ENCODE measurements at regions of chr12 and their contacts with region 1.

Region 1: DNA sequence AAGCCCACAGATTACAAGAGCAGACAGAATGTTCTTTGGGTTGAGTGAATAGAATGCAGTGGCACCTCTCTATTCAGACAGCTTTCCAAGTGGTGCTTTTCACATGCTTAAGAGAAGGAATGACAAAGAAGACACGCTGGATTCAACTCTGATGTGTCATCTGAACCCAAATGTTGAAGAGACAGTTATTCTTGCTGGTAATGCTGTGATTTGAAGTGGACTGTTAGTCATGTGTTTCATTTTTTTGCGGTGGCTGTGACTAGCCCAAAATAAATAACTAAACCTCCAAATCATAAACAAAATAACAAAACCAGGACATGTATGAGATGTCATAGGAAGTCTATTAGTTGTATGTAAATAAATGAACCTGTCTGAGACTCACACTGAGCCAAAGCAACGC is 391.8 kb upstream of the PRICKLE1 start:
- DNase-seq: no peak
- H3K4me3 ChIP-seq: no peak overlapping the region
- H3K27ac ChIP-seq: no peak overlapping the region
- H3K4me1 ChIP-seq: no peaks in the 10 kb centered on the region
- H3K27me3 ChIP-seq: no peaks in the 10 kb centered on the region
- CTCF ChIP-seq: no peak
- POLR2A ChIP-seq: no peak

Region 2: DNA sequence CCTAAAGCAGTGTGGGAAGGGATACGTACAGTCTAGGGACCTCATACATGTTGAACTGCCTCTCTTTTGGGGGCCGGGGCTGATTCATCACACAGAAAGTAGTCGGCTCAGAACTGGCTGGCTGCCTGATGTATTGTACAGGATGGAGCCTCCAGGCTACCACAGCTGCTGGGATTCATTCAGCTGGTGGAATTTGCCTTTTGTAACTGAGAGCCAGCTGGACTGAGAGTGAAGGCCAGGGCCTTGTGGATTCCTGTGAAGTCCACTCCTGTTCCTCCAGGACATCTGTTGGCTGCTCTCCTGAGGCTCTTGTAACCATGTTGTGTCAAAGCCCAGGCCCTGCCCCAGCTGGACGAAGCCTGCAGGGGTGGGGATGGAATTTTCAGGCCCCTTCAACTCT is 275.5 kb before region 1 on chr12:
- intact Hi-C with region 1: loop called (anchors 10 kb)
- DNase-seq: peak in 1 of 2 donors; percentile 93
- H3K4me3 ChIP-seq: no peak overlapping the region
- H3K27ac ChIP-seq: no peak overlapping the region
- H3K4me1 ChIP-seq: peaks cover 41% of the 10 kb centered on the region
- H3K27me3 ChIP-seq: no peaks in the 10 kb centered on the region
- CTCF ChIP-seq: no peak
- POLR2A ChIP-seq: no peak